Heart right ventricle (tissue), 16 donors: ENCODE measurements at regions of chr16 and their contacts with region 1.

Region 1: DNA sequence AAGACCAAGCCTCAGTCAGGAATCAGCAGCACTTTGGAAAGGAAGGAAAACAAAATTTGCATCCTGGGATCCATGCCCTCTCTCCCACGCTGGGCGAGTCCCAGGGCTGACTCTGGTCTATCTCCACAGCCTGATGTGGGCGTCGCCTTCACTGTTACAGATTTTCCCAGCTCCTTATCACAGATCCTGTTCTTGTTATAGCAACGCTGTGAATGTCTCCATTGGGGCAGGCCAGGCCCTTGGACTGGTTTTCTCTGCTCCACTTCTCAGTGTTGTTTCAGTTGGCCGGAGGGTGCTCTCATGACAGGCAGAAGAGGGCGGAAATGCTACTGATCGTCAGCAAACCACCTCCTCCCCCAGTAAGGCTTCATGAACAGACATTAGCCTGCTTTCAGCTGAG is 127.9 kb upstream of the CDH11 start:
- DNase-seq: peak; percentile 70 to 85
- ATAC-seq: peak; percentile 93 to 99 (median 97)
- H3K4me3 ChIP-seq: no peak overlapping the region
- H3K27ac ChIP-seq: peak overlapping the region; percentile 22 to 83 (median 68)
- H3K4me1 ChIP-seq: peaks cover 0 to 20% (median 6%) of the 10 kb centered on the region in 9 donors
- H3K27me3 ChIP-seq: no peaks in the 10 kb centered on the region
- CTCF ChIP-seq: peak in 3 of 9 donors; percentile 23 to 29 (median 27)

Region 2: DNA sequence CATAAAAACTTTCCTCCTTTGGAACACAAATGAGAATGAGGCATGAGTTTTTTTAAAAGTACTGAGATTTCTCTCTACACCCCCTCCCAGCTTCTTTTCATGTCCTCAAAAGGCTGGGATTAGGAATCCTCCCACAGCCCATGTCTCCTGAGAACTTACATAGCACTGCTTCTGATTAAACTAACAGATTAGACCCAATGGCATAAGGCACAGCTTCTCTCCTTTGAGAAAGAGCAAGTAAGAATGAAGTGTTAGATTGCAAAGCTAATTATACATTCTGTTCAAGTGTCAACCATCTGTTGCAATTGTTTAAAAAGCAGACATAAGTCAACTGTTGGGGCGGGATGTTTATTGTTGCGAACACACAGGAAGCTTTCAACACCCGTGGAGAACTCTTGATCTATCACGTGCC is 843.0 kb before region 1 on chr16:
- intact Hi-C with region 1: no loop called
- DNase-seq: no peak
- ATAC-seq: no peak
- H3K4me3 ChIP-seq: no peak overlapping the region
- H3K27ac ChIP-seq: no peak overlapping the region
- H3K4me1 ChIP-seq: peaks cover 0 to 8% (median 0%) of the 10 kb centered on the region in 9 donors
- H3K27me3 ChIP-seq: no peaks in the 10 kb centered on the region
- CTCF ChIP-seq: no peak

Region 3: DNA sequence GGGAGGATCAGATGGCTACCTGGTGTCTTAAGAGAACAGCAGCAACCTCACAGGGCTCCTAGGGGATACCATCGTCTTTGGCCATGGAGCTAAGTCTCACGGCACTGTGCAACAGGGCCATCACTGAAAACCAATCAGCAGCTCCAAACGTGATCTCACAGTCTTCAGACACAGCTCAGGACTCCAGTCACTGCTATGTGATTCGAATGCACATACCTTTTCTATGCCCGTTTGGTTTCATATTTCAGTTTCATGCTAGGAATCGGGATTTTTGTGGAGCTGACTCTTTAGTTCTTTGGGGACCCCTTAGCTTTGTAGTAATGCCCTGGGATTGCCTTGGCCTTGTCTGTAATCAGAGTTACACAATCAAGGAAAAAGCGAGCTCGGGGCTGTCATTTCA is 34.9 kb after region 1 on chr16:
- intact Hi-C with region 1: loop called in 1 of 10 experiments (anchors 1 kb)
- DNase-seq: no peak
- ATAC-seq: no peak
- H3K4me3 ChIP-seq: no peak overlapping the region
- H3K27ac ChIP-seq: no peak overlapping the region
- H3K4me1 ChIP-seq: peaks cover 0 to 14% (median 4%) of the 10 kb centered on the region in 9 donors
- H3K27me3 ChIP-seq: no peaks in the 10 kb centered on the region
- CTCF ChIP-seq: no peak

Region 4: GRCh38 chr16:65510850-65511249 is 261.1 kb after region 1 on chr16:
- intact Hi-C with region 1: loop called in 1 of 10 experiments (anchors 10 kb)
- DNase-seq: no peak
- ATAC-seq: peak in 1 of 8 donors; percentile 22
- H3K4me3 ChIP-seq: no peak overlapping the region
- H3K27ac ChIP-seq: no peak overlapping the region
- H3K4me1 ChIP-seq: peaks cover 0 to 19% (median 4%) of the 10 kb centered on the region in 9 donors
- H3K27me3 ChIP-seq: no peaks in the 10 kb centered on the region
- CTCF ChIP-seq: no peak